GM12878 (cell line): ENCODE measurements at regions of chr11 and their contacts with region 1.

Region 1: GRCh38 chr11:86193297-86194095 is 51.1 kb upstream of the EED start:
- DNase-seq: peak; percentile 78
- ATAC-seq: peak; percentile 97
- H3K4me3 ChIP-seq: peak overlapping the region; percentile 49; the same call in 1 of the 2 replicates
- H3K27ac ChIP-seq: peak overlapping the region; percentile 34
- H3K4me1 ChIP-seq: peaks cover 14% of the 10 kb centered on the region
- H3K27me3 ChIP-seq: no peaks in the 10 kb centered on the region
- CTCF ChIP-seq: peak; percentile 65 to 83 (median 76)
- EP300 ChIP-seq: peak in 1 of 2 experiments; percentile 48; a peak in 1 of 4 replicates
- POLR2A ChIP-seq: no peak
- RAD21 ChIP-seq: peak; percentile 85

Region 2: DNA sequence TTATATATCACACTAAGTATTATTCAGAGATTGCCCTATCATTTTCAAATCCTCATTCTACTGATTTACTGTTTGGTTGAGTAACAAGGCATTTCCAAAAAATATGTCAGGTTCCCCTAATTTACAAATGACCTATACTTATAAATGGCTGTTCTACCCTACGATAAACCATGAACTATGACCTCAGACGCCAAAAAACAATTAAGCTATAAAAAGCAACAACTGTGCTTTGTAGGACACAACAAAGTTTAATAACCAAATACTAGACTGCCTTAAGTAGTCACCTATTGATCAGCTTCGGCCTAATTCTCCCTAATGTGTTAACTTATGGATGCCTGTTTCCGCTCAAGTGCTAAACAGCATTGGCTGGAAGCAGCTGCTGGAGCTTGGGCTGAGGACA is 177.8 kb before region 1 on chr11:
- CTCF ChIA-PET with region 1: interaction called, 10 read pairs
- POLR2A ChIA-PET with region 1: no interaction called
- RAD21 ChIA-PET with region 1: no interaction called
- SMC1A ChIA-PET with region 1: interaction called, 5 read pairs
- in situ Hi-C with region 1: no loop called
- intact Hi-C with region 1: no loop called
- DNase-seq: no peak
- ATAC-seq: no peak
- H3K4me3 ChIP-seq: no peak overlapping the region
- H3K27ac ChIP-seq: peak overlapping the region; percentile 5; the same call in 1 of the 2 replicates
- H3K4me1 ChIP-seq: peaks cover 3% of the 10 kb centered on the region; the same call in 1 of the 2 replicates
- H3K27me3 ChIP-seq: no peaks in the 10 kb centered on the region
- CTCF ChIP-seq: no peak
- EP300 ChIP-seq: no peak
- POLR2A ChIP-seq: no peak
- RAD21 ChIP-seq: no peak

Region 3: DNA sequence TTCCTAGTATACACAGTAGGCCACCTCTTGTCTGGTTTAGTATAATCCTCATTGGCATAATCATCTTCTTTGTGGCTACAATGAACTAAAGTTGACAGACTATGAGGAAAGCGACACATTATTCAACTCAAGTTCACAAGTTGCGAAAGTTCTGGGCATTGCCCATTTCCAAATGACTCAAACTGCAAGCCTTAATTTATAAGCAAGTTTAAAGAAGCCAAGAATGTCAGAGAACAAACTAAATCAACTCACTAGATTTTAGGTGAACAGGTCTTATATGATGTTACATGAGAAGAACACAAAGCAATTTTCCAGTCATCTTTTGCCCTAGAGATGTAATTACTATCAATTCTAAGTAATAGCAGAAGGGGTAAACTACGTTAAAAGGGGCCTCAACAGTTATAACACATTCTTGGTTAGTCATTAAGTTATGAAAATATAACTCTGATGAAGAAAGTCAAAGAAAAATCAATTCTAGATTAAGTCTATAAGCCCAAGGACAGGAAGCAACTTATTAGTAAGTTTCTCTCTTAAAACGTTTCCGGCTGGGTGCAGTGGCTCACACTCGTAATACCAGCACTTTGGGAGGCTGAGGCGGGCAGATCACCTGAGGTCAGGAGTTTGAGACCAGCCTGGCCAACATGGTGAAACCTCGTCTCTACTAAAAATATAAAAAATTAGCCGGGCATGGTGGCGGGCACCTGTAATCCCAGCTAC is 146.1 kb before region 1 on chr11:
- CTCF ChIA-PET with region 1: interaction called, 154 read pairs
- POLR2A ChIA-PET with region 1: interaction called, 5 read pairs
- RAD21 ChIA-PET with region 1: interaction called, 77 read pairs
- SMC1A ChIA-PET with region 1: interaction called, 126 read pairs
- in situ Hi-C with region 1: loop called (anchors 5 kb)
- intact Hi-C with region 1: loop called (anchors 1 kb)
- DNase-seq: no peak
- ATAC-seq: peak; percentile 69
- H3K4me3 ChIP-seq: peak overlapping the region; percentile 40; the same call in 1 of the 2 replicates
- H3K27ac ChIP-seq: peak overlapping the region; percentile 49
- H3K4me1 ChIP-seq: peaks cover 45% of the 10 kb centered on the region
- H3K27me3 ChIP-seq: no peaks in the 10 kb centered on the region
- CTCF ChIP-seq: no peak
- EP300 ChIP-seq: no peak; a peak in 1 of 4 replicates
- POLR2A ChIP-seq: no peak
- RAD21 ChIP-seq: no peak

Region 4: DNA sequence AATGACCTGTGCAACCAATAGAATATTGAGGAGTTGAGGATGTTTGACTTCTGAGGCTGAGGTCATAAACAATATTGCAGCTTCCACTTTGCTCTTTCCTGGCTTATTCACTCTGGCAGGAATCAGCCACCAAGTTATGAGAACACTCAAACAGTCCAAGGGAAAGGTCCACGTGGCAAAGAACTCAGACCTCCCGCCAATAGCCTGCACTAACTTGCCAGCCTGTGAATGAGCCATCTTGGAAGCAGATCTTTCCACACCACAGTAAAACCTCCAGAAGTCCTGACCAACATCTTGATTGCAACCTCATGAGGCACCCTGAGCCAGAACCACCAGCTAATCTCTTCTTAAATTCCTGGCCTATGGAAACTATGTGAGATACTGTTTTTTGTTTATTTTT is 101.9 kb before region 1 on chr11:
- CTCF ChIA-PET with region 1: no interaction called
- POLR2A ChIA-PET with region 1: no interaction called
- RAD21 ChIA-PET with region 1: no interaction called
- SMC1A ChIA-PET with region 1: no interaction called
- in situ Hi-C with region 1: no loop called
- intact Hi-C with region 1: no loop called
- DNase-seq: no peak
- ATAC-seq: no peak
- H3K4me3 ChIP-seq: no peak overlapping the region
- H3K27ac ChIP-seq: no peak overlapping the region
- H3K4me1 ChIP-seq: no peaks in the 10 kb centered on the region
- H3K27me3 ChIP-seq: no peaks in the 10 kb centered on the region
- CTCF ChIP-seq: no peak
- EP300 ChIP-seq: no peak
- POLR2A ChIP-seq: no peak
- RAD21 ChIP-seq: no peak

Region 5: GRCh38 chr11:86116386-86116726 is 77.1 kb before region 1 on chr11:
- CTCF ChIA-PET with region 1: interaction called, 30 read pairs
- POLR2A ChIA-PET with region 1: interaction called, 3 read pairs
- RAD21 ChIA-PET with region 1: interaction called, 31 read pairs
- SMC1A ChIA-PET with region 1: interaction called, 28 read pairs
- in situ Hi-C with region 1: no loop called
- intact Hi-C with region 1: loop called (anchors 1 kb)
- DNase-seq: peak; percentile 77
- ATAC-seq: peak; percentile 94
- H3K4me3 ChIP-seq: 0 out of 2 replicates have a peak overlapping the region, but pooled peaks have one; percentile 37
- H3K27ac ChIP-seq: peak overlapping the region; percentile 90
- H3K4me1 ChIP-seq: peaks cover 18% of the 10 kb centered on the region
- H3K27me3 ChIP-seq: no peaks in the 10 kb centered on the region
- CTCF ChIP-seq: no peak
- EP300 ChIP-seq: peak; percentile 79; a peak in 2 of 4 replicates
- POLR2A ChIP-seq: no peak
- RAD21 ChIP-seq: no peak

Region 6: GRCh38 chr11:86162239-86162638 is 31.3 kb before region 1 on chr11:
- CTCF ChIA-PET with region 1: interaction called, 23 read pairs
- POLR2A ChIA-PET with region 1: interaction called, 3 read pairs
- RAD21 ChIA-PET with region 1: interaction called, 7 read pairs
- SMC1A ChIA-PET with region 1: interaction called, 27 read pairs
- in situ Hi-C with region 1: no loop called
- intact Hi-C with region 1: no loop called
- DNase-seq: no peak
- ATAC-seq: peak; percentile 29; the same call in 2 of the 3 replicates
- H3K4me3 ChIP-seq: no peak overlapping the region
- H3K27ac ChIP-seq: no peak overlapping the region
- H3K4me1 ChIP-seq: peaks cover 22% of the 10 kb centered on the region
- H3K27me3 ChIP-seq: no peaks in the 10 kb centered on the region
- CTCF ChIP-seq: no peak
- EP300 ChIP-seq: no peak
- POLR2A ChIP-seq: no peak
- RAD21 ChIP-seq: no peak

Region 7: DNA sequence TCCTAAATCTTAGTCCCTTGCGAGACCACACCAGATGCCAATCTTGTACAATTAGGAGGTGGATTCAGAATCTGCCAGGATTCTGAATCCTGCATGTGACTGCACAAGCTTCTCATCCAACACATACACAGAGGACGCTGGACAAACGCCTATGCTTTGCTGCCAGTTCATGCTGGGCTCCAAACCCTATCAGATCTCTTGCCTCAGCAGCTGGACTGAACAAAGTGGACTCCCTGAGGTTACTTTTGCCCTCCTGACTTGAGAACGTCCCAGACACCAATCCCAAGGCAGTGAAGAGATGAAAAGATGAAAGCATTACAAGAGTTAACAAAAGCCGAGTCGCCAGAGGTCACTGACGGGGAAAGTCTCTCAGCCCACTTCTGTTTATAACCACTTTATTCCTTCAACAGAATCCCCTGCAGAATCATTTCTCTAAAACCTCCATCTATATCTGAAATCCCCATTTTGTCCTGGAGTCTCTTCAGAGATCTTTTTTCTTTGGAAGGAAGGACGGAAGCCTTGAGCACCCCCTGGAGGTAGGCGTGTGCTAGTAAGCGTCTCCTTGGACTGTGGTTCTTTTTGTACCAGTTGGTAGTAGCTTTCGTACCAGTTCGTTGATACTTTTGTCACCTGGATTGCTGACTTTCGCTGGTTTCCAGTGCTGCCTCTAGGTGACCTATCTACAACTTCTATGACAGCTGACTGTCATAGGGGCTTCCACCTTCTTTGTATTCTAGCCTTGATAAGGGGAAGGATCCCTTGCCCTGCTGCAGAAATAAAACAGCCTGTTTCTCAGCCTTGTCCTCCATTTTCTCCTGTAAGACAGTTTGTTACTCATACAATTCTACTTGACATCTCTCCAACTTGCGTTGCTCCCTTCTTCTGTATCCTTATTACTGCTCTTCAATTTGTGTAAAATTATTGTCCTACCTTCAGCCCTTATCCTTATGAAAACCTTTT is 24.9 kb after region 1 on chr11:
- CTCF ChIA-PET with region 1: interaction called, 14 read pairs
- POLR2A ChIA-PET with region 1: interaction called, 3 read pairs
- RAD21 ChIA-PET with region 1: interaction called, 17 read pairs
- SMC1A ChIA-PET with region 1: interaction called, 32 read pairs
- in situ Hi-C with region 1: no loop called
- intact Hi-C with region 1: loop called (anchors 2 kb)
- DNase-seq: peak; percentile 76
- ATAC-seq: peak; percentile 63
- H3K4me3 ChIP-seq: peak overlapping the region; percentile 20; the same call in 1 of the 2 replicates
- H3K27ac ChIP-seq: peak overlapping the region; percentile 63
- H3K4me1 ChIP-seq: peaks cover 53% of the 10 kb centered on the region
- H3K27me3 ChIP-seq: no peaks in the 10 kb centered on the region
- CTCF ChIP-seq: peak; percentile 82 to 93 (median 92)
- EP300 ChIP-seq: no peak
- POLR2A ChIP-seq: no peak
- RAD21 ChIP-seq: peak; percentile 88

Region 8: GRCh38 chr11:86408845-86409244 is 215.3 kb after region 1 on chr11:
- CTCF ChIA-PET with region 1: no interaction called
- POLR2A ChIA-PET with region 1: no interaction called
- RAD21 ChIA-PET with region 1: no interaction called
- SMC1A ChIA-PET with region 1: no interaction called
- in situ Hi-C with region 1: no loop called
- intact Hi-C with region 1: no loop called
- DNase-seq: no peak
- ATAC-seq: no peak
- H3K4me3 ChIP-seq: no peak overlapping the region
- H3K27ac ChIP-seq: no peak overlapping the region
- H3K4me1 ChIP-seq: no peaks in the 10 kb centered on the region
- H3K27me3 ChIP-seq: no peaks in the 10 kb centered on the region
- CTCF ChIP-seq: peak in 1 of 3 experiments; percentile 11; a peak in 1 of 6 replicates
- EP300 ChIP-seq: no peak
- POLR2A ChIP-seq: no peak
- RAD21 ChIP-seq: no peak